CD4-positive, alpha-beta T cell (primary cell): ENCODE measurements at regions of chr1 and their contacts with region 1.

Region 1: GRCh38 chr1:235513495-235514366 is 9.5 kb upstream of the B3GALNT2 start:
- DNase-seq: peak in 6 of 14 experiments; percentile 5 to 82 (median 62)
- ATAC-seq: peak; percentile 68
- H3K4me3 ChIP-seq: no peak overlapping the region
- H3K4me3 Mint-ChIP-seq: no peak overlapping the region
- H3K27ac ChIP-seq: no peak overlapping the region
- H3K27ac Mint-ChIP-seq: no peak overlapping the region
- H3K4me1 ChIP-seq: no peaks in the 10 kb centered on the region
- H3K4me1 Mint-ChIP-seq: no peaks in the 10 kb centered on the region
- H3K27me3 ChIP-seq: no peaks in the 10 kb centered on the region
- H3K27me3 Mint-ChIP-seq: peaks cover 4% of the 10 kb centered on the region
- CTCF ChIP-seq: peak; percentile 91

Region 2: DNA sequence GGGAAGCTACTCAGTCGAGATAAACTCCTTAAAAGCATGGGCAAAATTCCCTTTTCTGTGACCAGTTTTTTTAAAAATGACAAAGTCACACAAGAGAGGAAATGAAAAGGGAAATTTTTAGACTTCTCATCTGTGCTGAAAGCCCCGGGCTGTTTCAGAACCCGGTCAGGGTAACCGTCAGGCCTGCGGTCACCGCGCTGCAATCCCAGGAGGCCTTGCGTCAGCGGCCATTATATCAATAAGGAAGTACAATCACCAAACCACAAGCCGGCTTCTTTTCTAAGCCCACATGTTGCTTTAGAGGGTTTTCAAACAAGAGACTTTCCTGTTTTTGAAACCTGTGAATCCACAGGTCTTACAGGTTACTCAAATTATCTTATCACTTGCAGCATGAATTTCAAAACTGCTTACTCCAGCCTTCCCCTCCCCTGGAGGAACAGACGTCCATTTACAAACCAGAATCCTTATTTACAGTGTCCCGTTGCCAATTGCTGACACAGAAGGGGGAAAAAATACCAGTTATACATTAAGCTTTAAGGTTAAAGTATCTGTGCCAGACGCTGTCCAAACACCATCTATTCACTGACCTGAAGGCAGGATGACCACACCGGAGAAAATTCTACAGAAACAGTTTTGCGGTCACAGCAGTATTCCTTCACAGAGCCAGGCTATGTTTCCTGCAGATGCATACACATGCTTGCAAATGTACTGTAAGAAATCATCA is 550.4 kb before region 1 on chr1:
- CTCF ChIA-PET with region 1: no interaction called
- POLR2A ChIA-PET with region 1: no interaction called
- intact Hi-C with region 1: no loop called
- DNase-seq: peak; percentile 59 to 97 (median 78)
- ATAC-seq: peak; percentile 79
- H3K4me3 ChIP-seq: peak overlapping the region; percentile 25
- H3K4me3 Mint-ChIP-seq: peak overlapping the region; percentile 78
- H3K27ac ChIP-seq: peak overlapping the region; percentile 71 to 81
- H3K27ac Mint-ChIP-seq: peak overlapping the region; percentile 90
- H3K4me1 ChIP-seq: peaks cover 63% of the 10 kb centered on the region
- H3K4me1 Mint-ChIP-seq: peaks cover 66% of the 10 kb centered on the region
- H3K27me3 ChIP-seq: no peaks in the 10 kb centered on the region
- H3K27me3 Mint-ChIP-seq: no peaks in the 10 kb centered on the region
- CTCF ChIP-seq: no peak

Region 3: GRCh38 chr1:235455823-235456222 is 57.9 kb before region 1 on chr1:
- CTCF ChIA-PET with region 1: no interaction called
- POLR2A ChIA-PET with region 1: no interaction called
- intact Hi-C with region 1: no loop called
- DNase-seq: no peak
- ATAC-seq: no peak
- H3K4me3 ChIP-seq: no peak overlapping the region
- H3K4me3 Mint-ChIP-seq: no peak overlapping the region
- H3K27ac ChIP-seq: no peak overlapping the region
- H3K27ac Mint-ChIP-seq: no peak overlapping the region
- H3K4me1 ChIP-seq: no peaks in the 10 kb centered on the region
- H3K4me1 Mint-ChIP-seq: no peaks in the 10 kb centered on the region
- H3K27me3 ChIP-seq: no peaks in the 10 kb centered on the region
- H3K27me3 Mint-ChIP-seq: no peaks in the 10 kb centered on the region
- CTCF ChIP-seq: no peak

Region 4: DNA sequence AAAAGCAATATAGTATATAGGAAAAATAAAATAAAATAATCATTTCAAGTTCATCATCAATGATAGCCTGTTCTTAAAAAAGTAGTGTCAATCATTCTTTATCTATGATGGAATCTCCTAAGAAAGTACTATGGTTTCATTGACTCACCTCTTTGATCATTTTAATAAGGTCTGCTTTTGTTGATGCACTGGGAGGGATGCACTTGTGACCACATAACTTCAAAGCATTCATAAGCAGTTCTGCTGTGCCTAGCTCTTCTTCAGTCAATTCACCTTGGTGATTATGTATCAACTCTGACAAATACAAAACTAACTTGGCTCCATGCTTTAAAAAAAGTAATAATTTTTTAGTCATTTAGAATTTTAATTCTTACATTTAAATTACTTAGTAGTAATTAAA is 220.6 kb after region 1 on chr1:
- CTCF ChIA-PET with region 1: no interaction called
- POLR2A ChIA-PET with region 1: no interaction called
- intact Hi-C with region 1: loop called in 1 of 2 experiments (anchors 5 kb)
- DNase-seq: peak in 3 of 14 experiments; percentile 10 to 30 (median 25)
- ATAC-seq: peak; percentile 63
- H3K4me3 ChIP-seq: no peak overlapping the region
- H3K4me3 Mint-ChIP-seq: no peak overlapping the region
- H3K27ac ChIP-seq: no peak overlapping the region
- H3K27ac Mint-ChIP-seq: no peak overlapping the region
- H3K4me1 ChIP-seq: no peaks in the 10 kb centered on the region
- H3K4me1 Mint-ChIP-seq: no peaks in the 10 kb centered on the region
- H3K27me3 ChIP-seq: no peaks in the 10 kb centered on the region
- H3K27me3 Mint-ChIP-seq: no peaks in the 10 kb centered on the region
- CTCF ChIP-seq: no peak

Region 5: GRCh38 chr1:235783148-235783776 is 269.5 kb after region 1 on chr1:
- CTCF ChIA-PET with region 1: interaction called, 5 read pairs
- POLR2A ChIA-PET with region 1: no interaction called
- intact Hi-C with region 1: loop called (anchors 1 kb)
- DNase-seq: peak in 3 of 14 experiments; percentile 19 to 39 (median 38)
- ATAC-seq: no peak
- H3K4me3 ChIP-seq: no peak overlapping the region
- H3K4me3 Mint-ChIP-seq: no peak overlapping the region
- H3K27ac ChIP-seq: no peak overlapping the region
- H3K27ac Mint-ChIP-seq: no peak overlapping the region
- H3K4me1 ChIP-seq: no peaks in the 10 kb centered on the region
- H3K4me1 Mint-ChIP-seq: no peaks in the 10 kb centered on the region
- H3K27me3 ChIP-seq: no peaks in the 10 kb centered on the region
- H3K27me3 Mint-ChIP-seq: no peaks in the 10 kb centered on the region
- CTCF ChIP-seq: peak; percentile 75